A549 (cell line): ENCODE measurements at regions of chrX and their contacts with region 1.

Region 1: DNA sequence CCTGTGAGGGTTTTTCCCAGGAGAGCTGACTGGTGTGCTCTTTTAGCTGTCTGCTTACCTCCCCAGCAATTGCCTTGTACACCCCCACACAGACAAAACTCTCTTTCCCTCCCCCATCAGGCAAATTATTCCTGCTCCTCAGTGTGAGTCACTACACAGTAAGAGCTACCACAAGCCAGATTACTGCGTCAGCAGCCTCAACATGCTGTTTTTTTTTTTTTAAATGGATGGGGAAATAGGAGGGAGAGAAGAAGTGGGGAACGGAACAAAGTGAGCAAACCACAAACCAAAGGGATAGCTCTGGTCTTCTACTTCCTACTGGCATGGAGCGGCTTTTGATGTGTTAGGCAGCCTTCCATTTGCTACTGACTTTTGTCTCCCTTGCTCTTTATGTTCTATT is 107.5 kb upstream of the ACSL4 start:
- DNase-seq: peak; percentile 31 to 69
- ATAC-seq: peak; percentile 91
- H3K4me3 ChIP-seq: no peak overlapping the region
- H3K27ac ChIP-seq: peak overlapping the region; percentile 71 to 90
- H3K4me1 ChIP-seq: peaks cover 36% of the 10 kb centered on the region
- CTCF ChIP-seq: no peak
- EP300 ChIP-seq: peak in 1 of 2 experiments; percentile 53; a peak in 2 of 5 replicates
- POLR2A ChIP-seq: no peak
- RAD21 ChIP-seq: peak in 1 of 2 experiments; percentile 32; a peak in 2 of 5 replicates

Region 2: GRCh38 chrX:109732780-109733657 is 107.6 kb before region 1 on chrX and contains the start of gene ACSL4:
- CTCF ChIA-PET with region 1: interaction called, 4 read pairs
- POLR2A ChIA-PET with region 1: interaction called, 13 read pairs
- DNase-seq: peak; percentile 65 to 79
- ATAC-seq: peak; percentile 96 to 99
- H3K4me3 ChIP-seq: peak within 1 kb of the TSS; percentile 80
- H3K27ac ChIP-seq: peak within 1 kb of the TSS; percentile 81 to 94
- H3K4me1 ChIP-seq: peaks cover 15% of the 10 kb centered on the region; the same call in 2 of the 3 replicates
- CTCF ChIP-seq: no peak
- EP300 ChIP-seq: no peak
- POLR2A ChIP-seq: no peak; the same call in 1 of the 2 replicates
- RAD21 ChIP-seq: no peak
- polyA plus RNA-seq, gene ACSL4: 20.8 and 31.6 TPM in 2 replicates